Psoas muscle (tissue), 8 donors: ENCODE measurements at regions of chr5 and their contacts with region 1.

Region 1: GRCh38 chr5:54249210-54250028 is 61.0 kb downstream of the ARL15 start:
- DNase-seq: no peak
- ATAC-seq: no peak
- H3K4me3 ChIP-seq: no peak overlapping the region
- H3K27ac ChIP-seq: no peak overlapping the region
- H3K4me1 ChIP-seq: peaks cover 9% of the 10 kb centered on the region
- H3K27me3 ChIP-seq: no peaks in the 10 kb centered on the region
- CTCF ChIP-seq: no peak

Region 2: DNA sequence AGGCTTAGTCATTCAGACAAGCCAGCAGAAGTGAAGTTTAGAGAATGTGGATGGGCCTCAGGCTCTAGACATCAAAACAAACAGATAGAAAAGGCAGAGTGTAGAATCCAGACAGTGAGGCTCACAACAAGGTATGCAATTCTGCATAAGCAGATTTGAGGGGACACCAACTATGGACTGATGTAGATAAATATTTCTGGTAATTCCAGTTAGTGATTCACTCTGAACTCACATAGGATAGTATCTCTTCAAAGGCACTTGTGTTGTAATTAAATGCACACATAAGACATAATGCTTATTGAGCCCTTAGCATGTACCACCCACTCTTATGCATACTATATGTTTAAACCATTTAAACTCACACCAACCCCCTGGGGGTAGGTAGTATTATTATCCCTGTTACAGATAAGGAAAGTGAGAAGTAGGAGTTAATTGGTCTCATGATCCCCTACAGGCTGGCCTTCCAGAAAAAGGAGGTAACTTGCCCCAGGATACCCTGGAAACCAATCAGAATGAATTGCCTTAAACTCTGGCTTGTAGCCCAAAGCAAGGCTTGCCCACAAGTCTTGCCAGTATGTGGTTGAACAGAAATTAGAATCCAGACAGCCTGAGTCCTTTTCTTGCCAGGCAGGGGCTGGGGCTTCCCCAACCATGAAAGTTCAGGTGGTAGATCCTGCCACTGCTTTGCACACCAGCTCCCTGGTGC is 166.6 kb after region 1 on chr5:
- intact Hi-C with region 1: loop called (anchors 5 kb)
- DNase-seq: no peak
- ATAC-seq: no peak
- H3K4me3 ChIP-seq: no peak overlapping the region
- H3K27ac ChIP-seq: no peak overlapping the region
- H3K4me1 ChIP-seq: no peaks in the 10 kb centered on the region
- H3K27me3 ChIP-seq: no peaks in the 10 kb centered on the region
- CTCF ChIP-seq: no peak

Region 3: GRCh38 chr5:54480296-54480695 is 230.9 kb after region 1 on chr5:
- intact Hi-C with region 1: loop called in 1 of 2 experiments (anchors 10 kb)
- DNase-seq: no peak
- ATAC-seq: peak in 1 of 4 donors; percentile 30
- H3K4me3 ChIP-seq: no peak overlapping the region
- H3K27ac ChIP-seq: no peak overlapping the region
- H3K4me1 ChIP-seq: peaks cover 16% of the 10 kb centered on the region
- H3K27me3 ChIP-seq: no peaks in the 10 kb centered on the region
- CTCF ChIP-seq: no peak

Region 4: GRCh38 chr5:54492178-54492577 is 242.8 kb after region 1 on chr5:
- intact Hi-C with region 1: loop called (anchors 5 to 10 kb)
- DNase-seq: no peak
- ATAC-seq: no peak
- H3K4me3 ChIP-seq: no peak overlapping the region
- H3K27ac ChIP-seq: no peak overlapping the region
- H3K4me1 ChIP-seq: peaks cover 4% of the 10 kb centered on the region
- H3K27me3 ChIP-seq: peaks cover 0 to 4% (median 0%) of the 10 kb centered on the region in 3 donors
- CTCF ChIP-seq: no peak

Region 5: GRCh38 chr5:54883374-54884212 is 634.2 kb after region 1 on chr5:
- intact Hi-C with region 1: loop called in 1 of 2 experiments (anchors 10 kb)
- DNase-seq: peak; percentile 47 to 61
- ATAC-seq: peak; percentile 75 to 84 (median 84)
- H3K4me3 ChIP-seq: peak overlapping the region; percentile 79
- H3K27ac ChIP-seq: no peak overlapping the region
- H3K4me1 ChIP-seq: no peaks in the 10 kb centered on the region
- H3K27me3 ChIP-seq: peaks cover 0 to 25% (median 0%) of the 10 kb centered on the region in 3 donors
- CTCF ChIP-seq: no peak